Prostate gland (tissue), 2 donors: ENCODE measurements at regions of chr1 and their contacts with region 1.

Region 1: GRCh38 chr1:39196244-39197215 is 8.0 kb upstream of the MACF1 start:
- DNase-seq: no peak
- H3K4me3 ChIP-seq: no peak overlapping the region
- H3K27ac ChIP-seq: peak overlapping the region; percentile 39 to 57
- H3K4me1 ChIP-seq: peaks cover 11% of the 10 kb centered on the region
- H3K27me3 ChIP-seq: no peaks in the 10 kb centered on the region
- CTCF ChIP-seq: no peak
- POLR2A ChIP-seq: no peak

Region 2: DNA sequence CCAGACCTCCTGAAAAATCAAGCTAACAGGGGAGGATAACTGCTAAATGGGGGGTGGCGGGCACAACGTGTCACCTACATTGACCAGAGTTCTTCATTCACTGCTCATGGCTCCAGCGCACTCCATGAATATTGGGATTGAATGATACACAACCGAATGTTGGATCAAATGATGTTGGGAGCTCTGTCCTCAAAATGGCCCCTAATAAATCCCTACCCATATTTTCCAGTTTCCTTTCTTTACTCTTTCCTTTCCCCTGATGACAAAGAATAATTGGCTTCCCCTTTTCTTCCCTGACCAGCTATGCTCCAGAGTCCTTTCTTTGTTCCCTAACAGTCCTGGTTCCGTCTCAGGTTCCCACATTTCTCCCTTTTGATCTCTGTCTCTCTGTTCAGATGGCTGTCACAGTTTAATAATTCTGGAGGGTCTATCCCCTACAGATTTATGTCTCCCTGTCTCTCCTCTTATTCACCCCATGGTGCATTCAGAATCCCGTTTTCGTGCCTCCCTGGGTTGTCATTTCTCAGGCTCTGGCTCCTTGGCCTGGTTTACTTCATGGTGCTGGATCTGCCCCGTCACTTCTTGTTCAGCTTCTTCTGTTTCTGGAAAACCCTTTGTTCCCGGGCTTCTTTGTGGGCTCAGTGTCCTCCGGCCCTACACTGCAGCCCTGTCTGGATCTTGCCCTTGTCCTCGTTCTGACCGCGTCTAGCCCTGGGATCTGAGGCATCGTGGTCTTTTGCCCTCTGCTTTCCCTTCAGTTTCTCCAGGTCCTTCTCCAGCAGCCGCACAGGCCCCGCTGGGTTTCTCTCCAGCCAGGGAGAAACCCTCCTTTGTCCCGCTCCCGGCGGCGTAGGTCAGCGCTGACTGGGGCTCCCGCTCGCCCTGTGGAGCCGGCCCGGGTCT is 92.1 kb before region 1 on chr1:
- intact Hi-C with region 1: loop called (anchors 1 kb)
- DNase-seq: peak; percentile 24
- H3K4me3 ChIP-seq: peak overlapping the region; percentile 82 to 90
- H3K27ac ChIP-seq: peak overlapping the region; percentile 90 to 96
- H3K4me1 ChIP-seq: peaks cover 22% of the 10 kb centered on the region
- H3K27me3 ChIP-seq: no peaks in the 10 kb centered on the region
- CTCF ChIP-seq: no peak
- POLR2A ChIP-seq: no peak